Activated T-helper 1 cell treated with anti-CD3 and anti-CD28 coated beads, Interleukin-12 subunit alpha, Interleukin-12 subunit beta, Interleukin-2, Interleukin-4 antibody, amounts not matched to agents 30 ng/mL and 10 ng/mL and 1 ng/mL, durations not matched to agents 14 hours and 24 hours and 36 hours (primary cell): ENCODE measurements at regions of chr1 and their contacts with region 1.

Region 1: GRCh38 chr1:60234776-60235175 is 161.2 kb upstream of the C1orf87 start:
- DNase-seq: no peak
- H3K4me3 Mint-ChIP-seq: no peak overlapping the region
- H3K27ac Mint-ChIP-seq: no peak overlapping the region
- H3K4me1 Mint-ChIP-seq: no peaks in the 10 kb centered on the region
- H3K27me3 Mint-ChIP-seq: no peaks in the 10 kb centered on the region

Region 2: DNA sequence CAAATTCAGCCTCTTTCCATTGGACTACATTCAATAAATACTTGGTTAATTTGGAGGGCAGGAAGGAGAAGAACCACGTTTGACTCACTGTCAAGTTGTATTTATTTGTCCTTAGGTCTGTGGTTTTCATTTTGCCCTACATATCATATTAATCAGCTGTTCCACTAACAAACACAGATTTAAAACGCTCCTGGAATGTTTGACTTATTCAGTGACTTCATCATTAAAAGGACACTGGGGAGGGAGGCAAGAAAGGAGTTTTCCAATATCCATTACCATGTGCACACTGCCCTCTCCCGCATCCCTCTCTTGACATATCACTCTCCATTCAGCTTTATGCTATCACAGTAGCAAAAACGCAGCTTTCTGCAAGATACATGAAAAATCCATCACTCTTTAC is 63.0 kb before region 1 on chr1:
- intact Hi-C with region 1: no loop called
- DNase-seq: no peak
- H3K4me3 Mint-ChIP-seq: no peak overlapping the region
- H3K27ac Mint-ChIP-seq: no peak overlapping the region
- H3K4me1 Mint-ChIP-seq: no peaks in the 10 kb centered on the region
- H3K27me3 Mint-ChIP-seq: no peaks in the 10 kb centered on the region

Region 3: DNA sequence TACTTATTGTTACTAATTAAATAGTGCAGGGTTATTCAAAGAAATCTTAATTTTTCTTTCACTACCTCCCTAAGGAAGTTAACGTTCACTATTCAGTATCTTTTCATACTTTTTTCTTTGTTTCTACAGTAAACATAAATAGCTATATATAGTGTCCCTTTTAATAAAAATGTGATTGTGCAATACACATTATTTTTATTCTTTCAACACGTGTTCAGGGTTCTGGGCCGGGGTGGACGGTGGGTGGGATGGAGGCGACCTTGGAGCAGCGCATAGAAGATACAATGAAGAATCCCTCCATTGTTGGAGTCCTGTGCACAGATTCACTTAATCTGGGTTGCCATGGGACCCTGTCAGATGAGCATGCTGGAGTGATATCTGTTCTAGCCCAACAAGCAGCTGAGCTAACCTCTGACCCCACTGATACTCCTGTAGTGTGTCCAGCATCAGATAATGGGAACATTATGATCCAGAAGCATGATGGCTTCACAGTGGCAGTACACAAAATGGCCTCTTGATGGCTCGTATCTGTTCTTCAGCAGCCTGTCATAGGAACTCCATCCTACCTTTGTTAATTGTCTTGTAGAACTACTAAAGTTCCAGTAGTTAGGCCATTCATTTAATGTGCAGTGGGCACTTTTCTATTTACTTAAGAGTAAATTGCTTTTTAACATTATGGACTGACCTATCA is 1804.0 kb after region 1 on chr1:
- intact Hi-C with region 1: loop called (anchors 5 kb)
- DNase-seq: no peak
- H3K4me3 Mint-ChIP-seq: no peak overlapping the region
- H3K27ac Mint-ChIP-seq: no peak overlapping the region
- H3K4me1 Mint-ChIP-seq: no peaks in the 10 kb centered on the region
- H3K27me3 Mint-ChIP-seq: no peaks in the 10 kb centered on the region